ENCODE measurements at regions of chr9 and their contacts with region 1.

Region 1: GRCh38 chr9:15104826-15105420 is 194.7 kb upstream of the FREM1 start:
- DNase-seq: peak; percentile 39
- H3K4me3 Mint-ChIP-seq: no peak overlapping the region
- H3K27ac Mint-ChIP-seq: no peak overlapping the region
- H3K4me1 Mint-ChIP-seq: no peaks in the 10 kb centered on the region
- H3K27me3 Mint-ChIP-seq: no peaks in the 10 kb centered on the region
- CTCF ChIP-seq: peak; percentile 38

Region 2: GRCh38 chr9:15135164-15135792 is 30.4 kb after region 1 on chr9:
- CTCF ChIA-PET with region 1: interaction called, 7 read pairs
- intact Hi-C with region 1: loop called (anchors 1 kb)
- DNase-seq: peak; percentile 47
- H3K4me3 Mint-ChIP-seq: peak overlapping the region; percentile 50
- H3K27ac Mint-ChIP-seq: no peak overlapping the region
- H3K4me1 Mint-ChIP-seq: peaks cover 9% of the 10 kb centered on the region
- H3K27me3 Mint-ChIP-seq: no peaks in the 10 kb centered on the region
- CTCF ChIP-seq: peak; percentile 68

Measured in Calu3 (cell line).